Ovary (tissue), 10 donors: ENCODE measurements at regions of chr1 and their contacts with region 1.

Region 1: DNA sequence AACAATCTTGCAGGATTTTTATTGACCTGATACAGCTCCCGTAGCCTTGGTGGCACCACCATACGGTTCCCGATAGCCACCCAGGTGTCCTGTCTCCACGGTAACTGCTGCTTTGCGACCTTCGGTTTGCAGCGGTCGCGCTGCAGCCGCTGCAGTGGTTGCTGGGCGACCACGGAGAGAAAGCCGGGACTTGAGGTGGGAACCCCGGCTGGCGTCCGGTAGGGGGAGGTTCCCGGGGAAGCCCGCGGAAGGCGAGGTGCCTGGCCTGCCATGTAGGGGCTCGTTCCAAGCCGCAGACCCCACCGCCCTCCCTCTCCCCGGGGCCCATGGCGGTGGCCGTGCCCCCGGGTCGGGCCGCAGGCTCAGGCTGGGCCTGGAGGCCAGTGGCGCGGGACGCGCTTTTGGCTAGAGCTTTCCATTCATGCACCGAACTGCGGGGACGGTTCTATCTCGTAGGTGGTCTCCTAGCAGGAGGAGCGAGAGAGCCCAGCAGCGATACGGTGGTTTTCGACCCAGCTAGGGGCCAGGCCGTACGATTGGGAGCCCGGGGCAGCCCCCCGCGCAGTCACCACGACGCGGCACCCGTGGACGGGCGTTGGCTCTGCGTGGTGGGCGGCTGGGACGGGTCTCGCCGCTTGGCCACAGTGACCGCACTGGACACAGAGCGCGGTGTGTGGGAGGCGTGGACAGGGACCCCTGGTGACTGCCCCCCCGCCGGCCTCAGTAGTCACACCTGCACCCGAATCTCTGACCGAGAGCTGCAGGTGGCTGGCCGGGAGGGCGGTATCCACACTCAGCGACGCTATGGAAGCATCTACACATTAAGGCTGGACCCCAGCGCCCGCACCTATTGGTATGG is at the start of gene KLHDC9:
- DNase-seq: peak; percentile 72 to 83 (median 76)
- H3K4me3 ChIP-seq: peak within 1 kb of the TSS; percentile 48
- H3K27ac ChIP-seq: peak within 1 kb of the TSS; percentile 15 to 39
- H3K4me1 ChIP-seq: peaks cover 8% of the 10 kb centered on the region
- H3K27me3 ChIP-seq: no peaks in the 10 kb centered on the region
- CTCF ChIP-seq: no peak
- EP300 ChIP-seq: no peak
- POLR2A ChIP-seq: no peak
- total RNA-seq, gene KLHDC9: 5.5 to 23.3 (median 7.5) TPM

Region 2: GRCh38 chr1:160675641-160676410 is 422.6 kb before region 1 on chr1:
- intact Hi-C with region 1: loop called in 3 of 4 experiments (anchors 5 to 10 kb)
- DNase-seq: peak; percentile 63 to 78 (median 67)
- H3K4me3 ChIP-seq: no peak overlapping the region
- H3K27ac ChIP-seq: no peak overlapping the region
- H3K4me1 ChIP-seq: no peaks in the 10 kb centered on the region
- H3K27me3 ChIP-seq: no peaks in the 10 kb centered on the region
- CTCF ChIP-seq: peak; percentile 34 to 43 (median 35)
- EP300 ChIP-seq: no peak
- POLR2A ChIP-seq: no peak

Region 3: DNA sequence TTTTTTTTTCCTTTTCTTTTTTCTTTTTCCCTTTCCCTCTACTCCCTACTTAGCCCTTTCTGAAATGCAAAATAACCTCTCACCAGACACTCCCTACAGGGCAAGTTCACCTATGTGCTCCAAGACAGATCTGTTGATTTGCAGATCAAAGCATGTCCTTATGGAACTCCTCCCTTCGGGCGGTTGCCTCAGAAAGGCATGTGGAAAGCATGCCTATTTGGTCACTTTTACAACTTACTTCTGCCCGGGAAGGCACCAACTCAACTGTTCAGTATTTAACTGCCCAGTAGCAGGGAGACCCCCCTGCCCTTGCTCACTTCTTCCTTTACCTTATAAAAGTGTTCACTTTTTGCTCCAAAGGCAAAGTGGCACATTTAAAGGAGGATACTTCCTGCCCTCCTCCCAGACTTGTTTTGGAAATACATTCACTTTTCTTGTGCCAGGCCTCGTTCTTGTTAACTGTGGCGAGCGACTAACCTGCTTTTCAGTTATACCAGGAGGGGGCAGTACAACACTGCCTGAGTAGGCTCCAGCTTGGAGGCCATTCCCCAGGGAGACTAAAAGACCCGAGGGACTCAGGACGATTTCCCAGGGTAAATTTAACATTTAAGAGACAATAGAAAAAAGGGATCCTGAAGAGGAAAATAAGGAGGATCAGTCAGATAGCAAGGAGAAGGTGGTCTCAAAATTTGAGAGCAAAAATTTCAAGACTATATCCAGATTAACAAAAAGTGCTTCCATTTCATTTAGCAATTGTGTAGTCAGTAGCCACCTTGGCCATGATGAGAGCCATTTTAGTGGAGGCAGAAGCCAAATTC is 371.7 kb before region 1 on chr1:
- intact Hi-C with region 1: loop called in 1 of 4 experiments (anchors 10 kb)
- DNase-seq: peak; percentile 44 to 60 (median 58)
- H3K4me3 ChIP-seq: no peak overlapping the region
- H3K27ac ChIP-seq: no peak overlapping the region
- H3K4me1 ChIP-seq: peaks cover 4% of the 10 kb centered on the region
- H3K27me3 ChIP-seq: no peaks in the 10 kb centered on the region
- CTCF ChIP-seq: peak; percentile 48 to 69 (median 64)
- EP300 ChIP-seq: no peak
- POLR2A ChIP-seq: no peak

Region 4: DNA sequence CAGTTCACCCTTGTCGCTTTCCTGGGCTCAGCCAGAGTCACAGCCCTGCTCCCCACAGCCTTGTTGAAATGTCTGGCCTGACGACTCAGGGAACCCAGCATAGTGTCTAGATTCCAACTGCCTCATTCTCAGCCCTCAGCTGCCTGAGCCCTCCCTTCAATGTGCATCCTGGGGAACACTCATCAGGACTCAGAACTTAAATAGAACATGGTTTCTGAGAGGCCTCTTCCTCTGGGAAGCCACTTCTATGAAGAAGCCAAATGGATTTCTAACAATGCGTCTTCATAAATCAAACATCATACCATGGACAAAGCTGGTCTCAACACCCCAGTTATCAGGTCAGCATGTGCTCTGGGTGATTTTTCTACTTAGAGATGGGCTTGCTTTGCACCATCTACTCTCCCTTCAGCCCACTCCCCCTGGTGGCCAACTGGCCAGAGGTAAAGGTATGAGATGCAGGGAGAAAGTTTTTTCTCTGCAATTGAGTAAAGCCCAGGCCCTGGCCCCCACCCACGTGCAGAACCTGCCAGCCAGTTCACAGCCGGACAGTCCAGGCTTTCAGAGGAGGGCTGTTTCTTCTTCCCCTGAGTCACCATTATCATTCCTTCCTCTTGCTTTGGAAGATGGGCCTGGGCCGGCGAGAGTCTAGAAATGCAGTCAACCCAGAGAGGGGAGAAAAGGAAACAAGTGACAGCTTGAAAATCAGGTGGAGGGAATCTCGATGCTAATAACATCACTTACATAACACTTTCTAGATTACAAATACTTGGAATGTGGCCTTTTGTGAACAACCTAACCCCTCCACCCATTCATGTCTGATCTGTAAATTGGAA is 267.9 kb before region 1 on chr1:
- intact Hi-C with region 1: loop called in 1 of 4 experiments (anchors 10 kb)
- DNase-seq: peak; percentile 36 to 73 (median 45)
- H3K4me3 ChIP-seq: no peak overlapping the region
- H3K27ac ChIP-seq: no peak overlapping the region
- H3K4me1 ChIP-seq: no peaks in the 10 kb centered on the region
- H3K27me3 ChIP-seq: no peaks in the 10 kb centered on the region
- CTCF ChIP-seq: no peak
- EP300 ChIP-seq: no peak
- POLR2A ChIP-seq: no peak

Region 5: GRCh38 chr1:160981584-160982411 is 116.6 kb before region 1 on chr1:
- intact Hi-C with region 1: no loop called
- DNase-seq: no peak
- H3K4me3 ChIP-seq: no peak overlapping the region
- H3K27ac ChIP-seq: no peak overlapping the region
- H3K4me1 ChIP-seq: no peaks in the 10 kb centered on the region
- H3K27me3 ChIP-seq: no peaks in the 10 kb centered on the region
- CTCF ChIP-seq: no peak
- EP300 ChIP-seq: no peak
- POLR2A ChIP-seq: no peak

Region 6: GRCh38 chr1:160997323-160998038 is 101.0 kb before region 1 on chr1:
- intact Hi-C with region 1: loop called in 3 of 4 experiments (anchors 2 to 10 kb)
- DNase-seq: peak; percentile 43 to 67 (median 63)
- H3K4me3 ChIP-seq: no peak overlapping the region
- H3K27ac ChIP-seq: peak overlapping the region in 1 of 2 donors; percentile 29
- H3K4me1 ChIP-seq: no peaks in the 10 kb centered on the region
- H3K27me3 ChIP-seq: no peaks in the 10 kb centered on the region
- CTCF ChIP-seq: peak in 2 of 3 donors; percentile 9 to 15
- EP300 ChIP-seq: no peak
- POLR2A ChIP-seq: no peak

Region 7: GRCh38 chr1:161045750-161046571 is 52.5 kb before region 1 on chr1 and contains the start of gene USF1:
- intact Hi-C with region 1: loop called in 2 of 4 experiments (anchors 10 kb)
- DNase-seq: peak; percentile 92 to 96 (median 93)
- H3K4me3 ChIP-seq: peak within 1 kb of the TSS; percentile 89
- H3K27ac ChIP-seq: peak within 1 kb of the TSS; percentile 79 to 92
- H3K4me1 ChIP-seq: peaks cover 2% of the 10 kb centered on the region
- H3K27me3 ChIP-seq: no peaks in the 10 kb centered on the region
- CTCF ChIP-seq: no peak
- EP300 ChIP-seq: no peak
- POLR2A ChIP-seq: peak; percentile 74
- total RNA-seq, gene USF1: 28.1 to 49.6 (median 44.0) TPM

Region 8: DNA sequence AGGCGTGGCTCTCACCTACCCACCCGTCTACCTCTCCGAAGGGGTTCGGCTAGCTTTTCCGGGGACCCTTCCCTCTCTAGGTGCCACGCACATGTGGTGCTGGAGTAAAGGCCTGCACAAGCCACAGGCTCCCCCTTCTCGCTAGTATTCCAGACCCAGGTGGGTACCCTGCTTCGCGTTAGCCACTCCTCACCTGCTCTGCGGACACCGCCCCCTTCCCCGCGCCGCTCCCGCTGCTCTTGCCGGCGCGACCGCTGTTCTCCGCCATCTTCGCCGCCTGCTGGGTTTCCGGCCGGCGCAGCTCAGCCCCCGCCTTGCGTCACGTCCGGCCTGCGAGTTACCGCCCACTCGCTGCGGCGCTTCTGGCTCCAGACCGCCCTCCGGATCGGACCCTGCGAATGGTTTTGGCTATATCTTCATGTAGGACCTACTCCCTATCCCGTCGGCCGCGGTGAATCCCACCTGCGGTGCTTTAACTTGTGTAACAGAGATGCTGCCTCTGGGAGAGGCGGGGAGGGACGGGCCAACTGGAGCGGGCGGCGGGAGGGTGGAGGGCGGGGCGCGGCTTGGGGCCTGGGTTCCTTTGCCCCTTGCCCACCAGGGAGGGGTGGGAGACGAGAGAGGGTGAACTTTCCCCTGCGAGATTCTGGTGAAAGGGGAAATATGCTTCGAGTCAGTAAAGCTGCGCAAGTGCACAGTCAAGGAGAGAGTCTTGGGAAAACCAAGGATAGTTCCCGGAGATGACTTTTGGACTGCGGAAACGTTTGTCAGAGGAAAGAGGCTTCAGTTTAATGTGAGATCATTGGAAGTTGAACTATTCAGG is 19.5 kb after region 1 on chr1 and contains the starts of genes NIT1 and PFDN2:
- intact Hi-C with region 1: no loop called
- DNase-seq: peak; percentile 84 to 92 (median 88)
- H3K4me3 ChIP-seq: peak within 1 kb of the TSS; percentile 87
- H3K27ac ChIP-seq: peak within 1 kb of the TSS; percentile 77 to 82
- H3K4me1 ChIP-seq: peaks cover 23% of the 10 kb centered on the region
- H3K27me3 ChIP-seq: no peaks in the 10 kb centered on the region
- CTCF ChIP-seq: peak in 1 of 3 donors; percentile 17
- EP300 ChIP-seq: peak; percentile 17
- POLR2A ChIP-seq: peak; percentile 94
- total RNA-seq, gene NIT1: 25.4 to 37.1 (median 33.7) TPM
- total RNA-seq, gene PFDN2: 18.1 to 54.0 (median 46.9) TPM